CD4-positive, alpha-beta T cell (primary cell): ENCODE measurements at regions of chr5 and their contacts with region 1.

Region 1: DNA sequence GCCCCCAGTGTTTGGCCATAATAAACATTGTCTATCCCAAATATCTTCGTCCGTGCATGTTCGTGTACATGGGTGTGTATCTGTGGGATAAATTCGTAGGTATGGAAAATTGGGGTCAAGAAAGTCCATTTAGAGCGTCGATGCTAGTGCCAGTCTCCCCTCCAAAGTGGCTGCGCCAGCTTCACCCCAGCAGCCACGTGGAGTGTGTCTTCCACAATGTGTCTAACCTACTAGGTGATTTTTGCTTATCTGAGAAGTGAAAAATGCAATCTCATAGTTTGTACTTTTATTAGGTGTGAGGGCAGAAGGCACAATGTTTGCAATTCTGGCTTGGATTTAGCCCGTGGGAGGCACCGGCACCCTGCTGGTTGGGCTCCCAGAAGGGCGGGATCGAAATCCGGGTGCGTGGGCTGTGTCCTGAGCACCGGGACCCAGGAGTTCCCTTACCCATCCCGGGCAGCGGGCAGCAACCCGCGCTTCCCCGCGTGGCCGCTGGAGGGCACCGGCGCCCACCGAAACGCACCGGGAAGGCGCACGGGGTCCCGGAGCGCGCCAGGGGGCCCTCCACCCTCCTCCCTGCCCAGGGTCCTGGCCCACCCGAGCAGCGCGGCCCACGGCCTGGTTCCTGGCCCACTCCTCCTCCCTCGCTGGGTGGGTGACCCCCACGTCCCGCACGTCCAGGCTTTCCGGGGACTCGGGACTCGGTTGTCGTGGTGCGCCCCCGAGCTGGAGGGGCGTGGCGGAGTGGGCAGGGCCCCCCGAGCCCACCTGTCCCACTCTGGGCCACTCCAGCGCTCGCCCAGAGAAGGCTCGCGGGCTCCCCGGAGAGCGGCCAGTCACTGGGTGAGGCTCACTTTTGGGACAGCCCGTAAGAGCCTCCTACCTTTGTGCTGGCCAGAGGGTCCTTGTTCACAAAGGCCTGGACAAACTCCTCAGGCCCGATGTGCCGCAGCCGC is 55.4 kb upstream of the RNF130 start:
- DNase-seq: peak in 7 of 14 experiments; percentile 9 to 51 (median 34)
- ATAC-seq: peak; percentile 55
- H3K4me3 ChIP-seq: no peak overlapping the region
- H3K4me3 Mint-ChIP-seq: no peak overlapping the region
- H3K27ac ChIP-seq: no peak overlapping the region
- H3K27ac Mint-ChIP-seq: no peak overlapping the region
- H3K4me1 ChIP-seq: peaks cover 3% of the 10 kb centered on the region
- H3K4me1 Mint-ChIP-seq: no peaks in the 10 kb centered on the region
- H3K27me3 ChIP-seq: peaks cover 0 to 4% of the 10 kb centered on the region in 2 experiments
- H3K27me3 Mint-ChIP-seq: peaks cover 12% of the 10 kb centered on the region
- CTCF ChIP-seq: peak; percentile 57

Region 2: GRCh38 chr5:179137643-179138567 is 989.1 kb before region 1 on chr5:
- CTCF ChIA-PET with region 1: no interaction called
- POLR2A ChIA-PET with region 1: no interaction called
- intact Hi-C with region 1: loop called in 1 of 2 experiments (anchors 5 kb)
- DNase-seq: no peak
- ATAC-seq: no peak
- H3K4me3 ChIP-seq: no peak overlapping the region
- H3K4me3 Mint-ChIP-seq: no peak overlapping the region
- H3K27ac ChIP-seq: no peak overlapping the region
- H3K27ac Mint-ChIP-seq: no peak overlapping the region
- H3K4me1 ChIP-seq: peaks cover 3% of the 10 kb centered on the region
- H3K4me1 Mint-ChIP-seq: peaks cover 6% of the 10 kb centered on the region
- H3K27me3 ChIP-seq: no peaks in the 10 kb centered on the region
- H3K27me3 Mint-ChIP-seq: no peaks in the 10 kb centered on the region
- CTCF ChIP-seq: no peak

Region 3: GRCh38 chr5:179878222-179879009 is 248.6 kb before region 1 on chr5:
- CTCF ChIA-PET with region 1: no interaction called
- POLR2A ChIA-PET with region 1: no interaction called
- intact Hi-C with region 1: no loop called
- DNase-seq: no peak
- ATAC-seq: no peak
- H3K4me3 ChIP-seq: no peak overlapping the region
- H3K4me3 Mint-ChIP-seq: no peak overlapping the region
- H3K27ac ChIP-seq: no peak overlapping the region
- H3K27ac Mint-ChIP-seq: no peak overlapping the region
- H3K4me1 ChIP-seq: no peaks in the 10 kb centered on the region
- H3K4me1 Mint-ChIP-seq: no peaks in the 10 kb centered on the region
- H3K27me3 ChIP-seq: no peaks in the 10 kb centered on the region
- H3K27me3 Mint-ChIP-seq: no peaks in the 10 kb centered on the region
- CTCF ChIP-seq: no peak

Region 4: GRCh38 chr5:180315762-180316212 is 188.8 kb after region 1 on chr5:
- CTCF ChIA-PET with region 1: no interaction called
- POLR2A ChIA-PET with region 1: no interaction called
- intact Hi-C with region 1: loop called in 1 of 2 experiments (anchors 5 kb)
- DNase-seq: peak; percentile 62 to 84 (median 72)
- ATAC-seq: peak; percentile 86
- H3K4me3 ChIP-seq: no peak overlapping the region
- H3K4me3 Mint-ChIP-seq: no peak overlapping the region
- H3K27ac ChIP-seq: no peak overlapping the region
- H3K27ac Mint-ChIP-seq: no peak overlapping the region
- H3K4me1 ChIP-seq: no peaks in the 10 kb centered on the region
- H3K4me1 Mint-ChIP-seq: peaks cover 6% of the 10 kb centered on the region
- H3K27me3 ChIP-seq: no peaks in the 10 kb centered on the region
- H3K27me3 Mint-ChIP-seq: peaks cover 4% of the 10 kb centered on the region
- CTCF ChIP-seq: peak; percentile 98

Region 5: DNA sequence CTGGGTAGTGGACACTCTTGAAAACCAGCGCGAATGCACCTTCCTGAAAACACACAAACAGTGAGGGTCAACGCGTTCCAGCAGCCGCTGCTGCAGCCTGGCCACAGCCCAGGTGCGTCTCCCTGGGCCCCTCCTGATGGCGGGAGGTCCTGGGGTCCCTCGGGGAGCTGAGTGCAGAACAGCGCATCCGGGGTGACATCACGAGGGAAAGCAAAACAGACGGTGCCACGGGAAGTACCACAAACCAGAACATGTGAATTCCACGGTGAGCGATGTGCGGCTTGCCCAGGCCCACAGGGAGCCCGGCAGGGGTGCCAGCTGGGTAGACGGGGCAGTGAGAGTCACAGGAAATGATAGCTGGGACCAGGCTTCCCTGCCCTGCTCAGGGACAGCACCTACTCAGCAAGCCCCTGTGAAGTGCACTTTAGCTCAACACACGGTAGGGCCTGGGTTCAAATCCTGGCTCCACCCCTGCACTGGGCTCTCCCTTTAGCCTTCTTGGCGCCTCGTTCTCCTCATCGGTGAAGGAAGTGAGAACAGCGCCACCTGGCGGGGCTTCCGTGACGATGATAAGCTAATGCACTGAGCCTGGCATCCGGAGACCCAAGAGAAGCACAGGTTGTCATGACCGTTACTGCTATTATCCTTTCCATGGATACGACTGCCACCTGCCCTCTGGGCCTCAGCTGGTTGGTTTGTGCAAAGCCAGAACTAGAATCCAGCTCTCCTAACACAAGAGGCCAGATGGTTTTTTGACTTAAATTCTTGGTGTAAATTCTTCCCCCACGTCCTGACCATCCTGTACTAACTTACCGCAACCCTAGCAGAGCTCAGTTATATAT is 201.5 kb after region 1 on chr5:
- CTCF ChIA-PET with region 1: no interaction called
- POLR2A ChIA-PET with region 1: no interaction called
- intact Hi-C with region 1: loop called in 1 of 2 experiments (anchors 2 kb)
- DNase-seq: peak; percentile 76 to 92 (median 82)
- ATAC-seq: peak; percentile 90
- H3K4me3 ChIP-seq: no peak overlapping the region
- H3K4me3 Mint-ChIP-seq: no peak overlapping the region
- H3K27ac ChIP-seq: no peak overlapping the region
- H3K27ac Mint-ChIP-seq: no peak overlapping the region
- H3K4me1 ChIP-seq: peaks cover 7% of the 10 kb centered on the region
- H3K4me1 Mint-ChIP-seq: no peaks in the 10 kb centered on the region
- H3K27me3 ChIP-seq: peaks cover 0 to 5% of the 10 kb centered on the region in 2 experiments
- H3K27me3 Mint-ChIP-seq: peaks cover 19% of the 10 kb centered on the region
- CTCF ChIP-seq: peak; percentile 90

Region 6: GRCh38 chr5:180470966-180471582 is 344.1 kb after region 1 on chr5:
- CTCF ChIA-PET with region 1: no interaction called
- POLR2A ChIA-PET with region 1: no interaction called
- intact Hi-C with region 1: loop called in 1 of 2 experiments (anchors 2 kb)
- DNase-seq: peak; percentile 29 to 77 (median 39)
- ATAC-seq: peak; percentile 83
- H3K4me3 ChIP-seq: no peak overlapping the region
- H3K4me3 Mint-ChIP-seq: no peak overlapping the region
- H3K27ac ChIP-seq: no peak overlapping the region
- H3K27ac Mint-ChIP-seq: no peak overlapping the region
- H3K4me1 ChIP-seq: peaks cover 4% of the 10 kb centered on the region
- H3K4me1 Mint-ChIP-seq: no peaks in the 10 kb centered on the region
- H3K27me3 ChIP-seq: peaks cover 0 to 8% of the 10 kb centered on the region in 2 experiments
- H3K27me3 Mint-ChIP-seq: peaks cover 5% of the 10 kb centered on the region
- CTCF ChIP-seq: peak; percentile 91